ENCODE measurements at regions of chr5 and their contacts with region 1.

Region 1: GRCh38 chr5:42612750-42613366 is 143.8 kb upstream of the CCDC152 start:
- DNase-seq: no peak
- ATAC-seq: no peak
- H3K4me3 ChIP-seq: no peak overlapping the region
- H3K4me3 Mint-ChIP-seq: no peak overlapping the region
- H3K27ac ChIP-seq: no peak overlapping the region
- H3K27ac Mint-ChIP-seq: no peak overlapping the region
- H3K4me1 ChIP-seq: no peaks in the 10 kb centered on the region
- H3K4me1 Mint-ChIP-seq: peaks cover 4% of the 10 kb centered on the region
- H3K27me3 ChIP-seq: peaks cover 0 to 3% (median 0%) of the 10 kb centered on the region in 4 experiments
- H3K27me3 Mint-ChIP-seq: peaks cover 30% of the 10 kb centered on the region
- CTCF ChIP-seq: no peak

Region 2: GRCh38 chr5:42596817-42597216 is 16.0 kb before region 1 on chr5:
- CTCF ChIA-PET with region 1: no interaction called
- POLR2A ChIA-PET with region 1: interaction called, 13 read pairs
- intact Hi-C with region 1: no loop called
- DNase-seq: no peak
- ATAC-seq: no peak
- H3K4me3 ChIP-seq: no peak overlapping the region
- H3K4me3 Mint-ChIP-seq: no peak overlapping the region
- H3K27ac ChIP-seq: no peak overlapping the region
- H3K27ac Mint-ChIP-seq: no peak overlapping the region
- H3K4me1 ChIP-seq: peaks cover 0 to 3% of the 10 kb centered on the region in 2 donors
- H3K4me1 Mint-ChIP-seq: peaks cover 2% of the 10 kb centered on the region
- H3K27me3 ChIP-seq: no peaks in the 10 kb centered on the region
- H3K27me3 Mint-ChIP-seq: no peaks in the 10 kb centered on the region
- CTCF ChIP-seq: no peak